ENCODE measurements at regions of chr10 and their contacts with region 1.

Region 1: DNA sequence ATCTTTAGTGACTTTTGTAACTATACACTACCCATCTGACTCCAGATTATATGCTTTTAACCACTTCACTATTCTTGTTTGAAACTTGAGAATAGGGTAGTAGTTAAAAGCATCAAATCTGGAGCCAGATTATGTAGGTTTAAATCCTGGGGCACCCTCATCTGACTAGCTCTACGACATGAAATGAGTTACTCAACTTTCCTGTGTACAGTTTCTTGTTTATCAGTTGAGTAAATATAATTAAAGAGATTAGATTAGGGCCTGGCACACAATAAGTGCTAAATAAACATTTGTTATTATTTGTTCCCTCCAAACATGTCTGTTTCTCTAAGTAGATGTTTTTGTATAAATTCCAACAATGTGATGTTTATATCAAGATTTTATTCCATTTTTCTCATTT is 485.3 kb upstream of the LRRTM3 start:
- DNase-seq: no peak
- H3K4me3 ChIP-seq: no peak overlapping the region
- H3K27ac ChIP-seq: no peak overlapping the region
- H3K4me1 ChIP-seq: no peaks in the 10 kb centered on the region
- H3K27me3 ChIP-seq: no peaks in the 10 kb centered on the region
- CTCF ChIP-seq: no peak
- POLR2A ChIP-seq: no peak

Region 2: DNA sequence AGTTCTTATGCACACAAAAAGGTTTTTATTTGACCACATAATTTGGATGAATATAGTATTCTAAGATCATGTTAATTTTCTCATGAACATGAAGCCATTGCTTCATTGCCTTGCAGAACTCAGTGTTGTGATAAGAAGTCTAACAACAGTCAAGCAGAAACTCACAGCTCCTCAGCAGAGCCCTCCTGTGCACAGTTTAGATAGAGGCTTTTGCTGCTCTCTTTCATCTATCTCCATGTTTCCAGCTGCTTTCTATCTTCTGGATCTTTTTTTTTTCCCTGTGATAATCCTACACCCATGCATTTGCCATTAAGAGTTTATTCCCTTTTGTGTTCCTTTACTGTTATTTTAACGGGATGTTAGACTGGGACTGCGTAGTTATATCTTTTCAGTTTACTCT is 72.4 kb before region 1 on chr10:
- CTCF ChIA-PET with region 1: no interaction called
- POLR2A ChIA-PET with region 1: no interaction called
- dilution Hi-C with region 1: no loop called
- intact Hi-C with region 1: no loop called
- DNase-seq: no peak
- H3K4me3 ChIP-seq: no peak overlapping the region
- H3K27ac ChIP-seq: no peak overlapping the region
- H3K4me1 ChIP-seq: no peaks in the 10 kb centered on the region
- H3K27me3 ChIP-seq: no peaks in the 10 kb centered on the region
- CTCF ChIP-seq: no peak
- POLR2A ChIP-seq: no peak

Region 3: DNA sequence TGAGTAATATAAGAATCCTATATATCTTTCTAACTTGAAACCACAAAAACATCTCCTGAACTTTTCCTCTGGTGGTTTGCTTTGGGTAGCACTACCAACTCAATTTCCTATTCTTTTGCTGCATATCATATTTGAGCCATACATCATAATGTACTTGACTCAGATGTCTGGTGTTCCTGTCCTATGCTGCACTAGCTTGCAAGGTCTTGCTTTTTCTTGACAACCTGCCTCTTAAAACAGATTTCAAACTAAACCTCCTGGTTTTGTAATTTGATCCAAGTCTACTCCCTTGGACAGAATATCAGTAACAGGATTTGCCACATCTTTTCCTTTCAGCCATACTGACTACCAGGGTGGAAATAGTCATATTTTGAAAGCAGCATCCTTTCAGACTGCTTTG is 35.0 kb before region 1 on chr10:
- CTCF ChIA-PET with region 1: no interaction called
- POLR2A ChIA-PET with region 1: no interaction called
- dilution Hi-C with region 1: no loop called
- intact Hi-C with region 1: no loop called
- DNase-seq: no peak
- H3K4me3 ChIP-seq: no peak overlapping the region
- H3K27ac ChIP-seq: no peak overlapping the region
- H3K4me1 ChIP-seq: no peaks in the 10 kb centered on the region
- H3K27me3 ChIP-seq: no peaks in the 10 kb centered on the region
- CTCF ChIP-seq: no peak
- POLR2A ChIP-seq: no peak

Region 4: DNA sequence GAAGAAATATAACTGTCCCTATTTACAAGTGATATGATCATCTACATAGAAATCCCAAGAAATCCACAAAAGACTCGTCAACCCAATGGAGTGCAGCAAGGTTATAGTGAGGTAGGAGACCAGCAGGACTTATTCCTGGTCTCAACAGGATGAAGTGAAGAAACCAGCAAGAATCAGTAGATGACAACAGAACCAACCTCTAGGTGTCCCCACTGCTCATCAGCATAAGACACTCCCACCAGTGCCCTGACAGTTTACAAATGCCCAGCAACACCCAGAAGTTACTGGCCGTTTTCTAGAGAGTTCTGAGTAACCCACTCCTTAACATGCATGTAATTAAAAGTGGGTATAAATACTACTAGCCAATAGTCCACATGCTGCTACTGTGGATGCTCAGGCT is 14.7 kb after region 1 on chr10:
- CTCF ChIA-PET with region 1: no interaction called
- POLR2A ChIA-PET with region 1: interaction called, 11 read pairs
- dilution Hi-C with region 1: no loop called
- intact Hi-C with region 1: no loop called
- DNase-seq: no peak
- H3K4me3 ChIP-seq: no peak overlapping the region
- H3K27ac ChIP-seq: no peak overlapping the region
- H3K4me1 ChIP-seq: no peaks in the 10 kb centered on the region
- H3K27me3 ChIP-seq: no peaks in the 10 kb centered on the region
- CTCF ChIP-seq: no peak
- POLR2A ChIP-seq: no peak